Cardiac septum (tissue), 1 donor: ENCODE measurements at regions of chr21 and their contacts with region 1.

Region 1: DNA sequence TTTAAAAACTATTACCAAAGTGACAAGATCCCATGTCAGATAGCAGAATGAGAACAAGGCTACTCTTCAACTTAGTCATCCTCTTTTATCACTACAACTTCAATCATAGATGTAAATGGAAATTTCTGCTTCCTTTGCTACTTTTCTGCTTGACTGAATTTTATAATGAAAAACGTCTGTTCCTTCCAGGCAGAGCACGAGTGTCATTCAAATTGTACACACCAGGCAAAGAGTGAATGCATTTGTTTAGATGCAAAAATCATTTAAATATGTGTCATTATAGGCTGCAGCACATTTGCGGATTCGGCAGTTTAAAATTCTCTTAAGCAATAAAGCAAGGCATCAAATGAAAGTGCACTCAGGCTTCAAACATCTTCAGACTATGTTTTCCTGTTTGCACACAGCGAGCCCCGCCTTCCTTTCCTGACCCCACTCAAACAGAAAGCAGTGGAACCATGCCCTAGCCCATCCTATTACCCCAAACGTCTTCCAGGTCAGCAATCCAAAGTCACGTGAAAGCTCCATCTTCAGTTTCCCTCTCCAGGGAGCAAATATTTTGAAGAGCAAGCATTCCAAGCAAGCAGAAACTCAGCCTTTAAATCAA is 99.6 kb downstream of the APP start:
- DNase-seq: no peak

Region 2: GRCh38 chr21:26106562-26106961 is 35.6 kb after region 1 on chr21:
- intact Hi-C with region 1: loop called (anchors 5 kb)
- DNase-seq: no peak